ENCODE measurements at regions of chr2 and their contacts with region 1.

Region 1: GRCh38 chr2:152635635-152636298 is 81.5 kb downstream of the PRPF40A start:
- H3K4me3 ChIP-seq: no peak overlapping the region
- H3K27ac ChIP-seq: no peak overlapping the region
- H3K4me1 ChIP-seq: no peaks in the 10 kb centered on the region
- CTCF ChIP-seq: peak; percentile 60; the same call in 1 of the 2 replicates

Region 2: GRCh38 chr2:152175458-152176325 is 460.1 kb before region 1 on chr2 and contains the start of gene STAM2:
- CTCF ChIA-PET with region 1: interaction called, 31 read pairs
- POLR2A ChIA-PET with region 1: interaction called, 10 read pairs
- H3K4me3 ChIP-seq: peak within 1 kb of the TSS; percentile 74
- H3K27ac ChIP-seq: peak within 1 kb of the TSS; percentile 89
- H3K4me1 ChIP-seq: peaks cover 3% of the 10 kb centered on the region; the same call in 1 of the 2 replicates
- CTCF ChIP-seq: peak; percentile 97

Region 3: DNA sequence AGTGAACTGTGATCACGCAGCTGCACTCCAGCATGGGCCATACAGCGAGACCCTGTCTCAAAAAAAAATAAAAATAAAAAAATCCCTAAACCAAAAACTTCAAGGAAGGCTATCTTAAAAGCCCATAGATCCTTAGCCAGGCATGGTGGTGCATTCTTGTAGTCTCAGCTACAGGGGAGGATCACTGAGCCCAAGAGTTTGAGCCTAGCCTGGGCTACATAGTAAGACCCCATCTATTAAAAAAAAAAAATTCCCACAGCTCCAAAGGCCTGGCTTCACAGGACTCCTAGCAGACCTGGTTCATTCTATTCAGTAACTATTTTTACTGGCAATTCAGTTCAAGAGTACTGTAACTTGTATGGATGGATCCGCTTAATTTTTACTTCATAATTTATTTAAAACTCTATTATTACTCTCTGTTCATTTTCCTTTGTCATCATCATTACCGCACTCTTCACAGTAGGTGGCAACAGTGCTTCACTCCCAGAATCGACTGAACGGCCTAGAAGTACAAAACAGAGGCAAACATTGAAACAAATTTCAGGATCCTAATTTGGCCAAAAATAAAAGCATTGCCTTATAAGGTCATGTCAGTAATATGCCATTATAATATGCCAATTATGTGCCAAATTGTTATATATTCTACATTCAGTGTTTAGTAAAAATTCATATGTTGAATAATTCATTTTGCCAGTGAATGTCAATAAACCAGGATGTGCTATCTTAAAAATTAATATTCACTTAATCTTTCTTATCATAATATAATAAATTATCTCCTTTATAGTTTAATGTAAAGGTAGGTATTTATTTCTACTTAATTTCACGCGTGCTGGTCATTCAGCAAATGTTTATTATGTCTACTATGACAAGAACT is 445.9 kb before region 1 on chr2:
- CTCF ChIA-PET with region 1: interaction called, 26 read pairs
- POLR2A ChIA-PET with region 1: no interaction called
- H3K4me3 ChIP-seq: no peak overlapping the region
- H3K27ac ChIP-seq: no peak overlapping the region
- H3K4me1 ChIP-seq: no peaks in the 10 kb centered on the region
- CTCF ChIP-seq: peak; percentile 65

Region 4: GRCh38 chr2:152613235-152613634 is 22.5 kb before region 1 on chr2:
- CTCF ChIA-PET with region 1: interaction called, 13 read pairs
- POLR2A ChIA-PET with region 1: no interaction called
- H3K4me3 ChIP-seq: no peak overlapping the region
- H3K27ac ChIP-seq: no peak overlapping the region
- H3K4me1 ChIP-seq: no peaks in the 10 kb centered on the region
- CTCF ChIP-seq: no peak

Region 5: GRCh38 chr2:152648336-152648735 is 12.6 kb after region 1 on chr2:
- CTCF ChIA-PET with region 1: interaction called, 34 read pairs
- POLR2A ChIA-PET with region 1: no interaction called
- H3K4me3 ChIP-seq: no peak overlapping the region
- H3K27ac ChIP-seq: no peak overlapping the region
- H3K4me1 ChIP-seq: no peaks in the 10 kb centered on the region
- CTCF ChIP-seq: no peak

Measured in HEK293 (cell line).